ENCODE measurements at regions of chr1 and their contacts with region 1.

Region 1: DNA sequence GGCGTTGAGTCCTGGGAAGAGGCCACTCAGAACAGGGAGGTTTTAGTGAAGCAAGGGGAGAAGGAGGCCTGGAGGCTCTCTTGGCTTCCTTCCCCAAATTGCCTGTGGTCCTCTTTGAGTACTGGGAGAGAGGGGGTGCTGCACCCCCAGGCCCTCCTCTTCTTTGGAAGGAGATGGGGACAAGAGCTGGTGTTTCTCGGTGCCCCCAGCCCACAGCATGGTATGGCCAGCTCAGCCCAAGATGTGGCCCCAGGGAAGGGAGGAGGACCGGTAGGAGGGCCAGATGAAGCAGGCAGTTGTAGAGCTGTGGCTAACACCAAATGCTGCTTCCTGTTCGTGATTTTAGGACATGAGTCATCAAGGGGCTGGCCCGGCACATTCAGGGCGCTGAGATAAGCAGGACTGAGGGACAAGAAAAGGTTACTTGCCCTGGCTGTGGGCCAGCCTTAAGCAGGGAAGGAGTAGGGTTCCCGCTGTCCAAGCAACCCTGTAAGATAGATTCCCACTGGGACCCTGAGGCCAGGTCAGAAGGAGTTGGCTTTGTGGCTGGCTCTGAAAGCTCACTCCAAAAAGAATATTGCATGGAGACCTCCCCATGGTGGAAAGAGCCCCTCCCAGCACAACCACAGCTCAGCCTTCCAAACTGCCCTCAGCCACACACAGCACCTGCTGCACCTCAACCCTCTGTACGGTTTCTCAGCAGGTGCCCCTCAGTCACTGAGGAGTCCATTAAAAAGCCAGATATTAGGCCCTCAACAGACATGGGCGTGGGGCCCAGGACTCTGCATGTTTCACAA is 4.9 kb upstream of the TNFRSF1B start:
- DNase-seq: peak in 2 of 9 donors; percentile 36 to 74
- ATAC-seq: peak; percentile 87
- H3K4me3 ChIP-seq: peak overlapping the region; percentile 38
- H3K4me3 Mint-ChIP-seq: peak overlapping the region in 7 of 10 donors; percentile 37 to 82 (median 53)
- H3K27ac ChIP-seq: peak overlapping the region; percentile 20
- H3K27ac Mint-ChIP-seq: peak overlapping the region in 6 of 9 donors; percentile 4 to 96 (median 72)
- H3K4me1 ChIP-seq: peaks cover 49 to 74% of the 10 kb centered on the region in 2 donors
- H3K4me1 Mint-ChIP-seq: peaks cover 60 to 87% (median 65%) of the 10 kb centered on the region in 7 donors
- H3K27me3 ChIP-seq: no peaks in the 10 kb centered on the region
- H3K27me3 Mint-ChIP-seq: no peaks in the 10 kb centered on the region

Region 2: DNA sequence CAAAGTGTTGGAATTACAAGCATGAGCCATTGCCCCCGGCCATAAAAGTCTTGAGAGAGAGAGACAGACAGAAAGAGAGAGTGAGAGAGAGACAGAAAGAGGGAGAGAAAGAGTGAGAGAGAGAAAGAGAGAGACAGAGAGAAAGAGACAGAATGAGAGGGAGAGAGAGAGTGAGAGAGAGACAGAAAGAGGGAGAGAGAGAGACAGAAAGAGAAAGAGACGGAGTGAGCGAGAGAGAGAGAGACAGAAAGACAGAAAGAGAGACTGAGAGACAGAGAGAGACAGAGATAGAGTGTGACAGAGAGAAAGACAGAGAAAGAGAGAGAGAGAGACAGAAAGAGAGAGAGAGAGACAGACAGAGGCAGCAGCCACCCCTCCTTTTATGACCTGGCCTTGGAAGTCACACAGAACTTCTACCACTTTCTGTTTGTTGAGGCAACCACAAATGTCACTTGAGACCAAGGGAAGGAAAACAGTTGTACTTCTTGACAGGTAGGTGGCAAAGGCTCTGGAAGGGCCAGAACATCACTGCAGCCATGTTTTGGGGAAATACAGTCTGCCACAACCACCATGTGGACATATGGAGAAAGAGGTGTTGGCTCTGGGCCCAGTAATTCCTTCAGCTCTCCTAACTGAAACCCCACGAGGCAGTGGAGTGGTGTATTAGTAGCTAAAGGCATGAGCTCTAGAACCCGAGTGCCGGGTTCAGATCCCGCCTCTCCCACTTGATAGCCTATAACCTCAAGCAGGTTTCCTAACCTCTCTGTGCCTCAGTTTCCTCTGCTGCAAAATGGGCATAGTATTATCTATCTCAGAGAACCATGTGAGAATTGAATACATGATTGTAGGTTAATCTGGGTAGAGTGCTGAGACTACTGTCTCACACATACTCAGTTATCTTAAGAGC is 48.2 kb before region 1 on chr1:
- CTCF ChIA-PET with region 1: no interaction called
- POLR2A ChIA-PET with region 1: no interaction called
- intact Hi-C with region 1: no loop called
- DNase-seq: no peak
- ATAC-seq: no peak
- H3K4me3 ChIP-seq: no peak overlapping the region
- H3K4me3 Mint-ChIP-seq: peak overlapping the region in 1 of 10 donors; percentile 7
- H3K27ac ChIP-seq: no peak overlapping the region
- H3K27ac Mint-ChIP-seq: peak overlapping the region in 2 of 9 donors; percentile 30 to 78
- H3K4me1 ChIP-seq: no peaks in the 10 kb centered on the region
- H3K4me1 Mint-ChIP-seq: peaks cover 0 to 27% (median 4%) of the 10 kb centered on the region in 7 donors
- H3K27me3 ChIP-seq: no peaks in the 10 kb centered on the region
- H3K27me3 Mint-ChIP-seq: no peaks in the 10 kb centered on the region

Region 3: GRCh38 chr1:12142891-12143630 is 18.8 kb before region 1 on chr1:
- CTCF ChIA-PET with region 1: interaction called, 3 read pairs
- POLR2A ChIA-PET with region 1: interaction called, 8 read pairs
- intact Hi-C with region 1: loop called in 1 of 2 experiments (anchors 2 kb)
- DNase-seq: no peak
- ATAC-seq: peak; percentile 66
- H3K4me3 ChIP-seq: no peak overlapping the region
- H3K4me3 Mint-ChIP-seq: peak overlapping the region in 8 of 10 donors; percentile 1 to 69 (median 52)
- H3K27ac ChIP-seq: no peak overlapping the region
- H3K27ac Mint-ChIP-seq: peak overlapping the region; percentile 76 to 94 (median 92)
- H3K4me1 ChIP-seq: peaks cover 24 to 37% of the 10 kb centered on the region in 2 donors
- H3K4me1 Mint-ChIP-seq: peaks cover 37 to 54% (median 46%) of the 10 kb centered on the region in 7 donors
- H3K27me3 ChIP-seq: no peaks in the 10 kb centered on the region
- H3K27me3 Mint-ChIP-seq: no peaks in the 10 kb centered on the region